ENCODE measurements at regions of chr4 and their contacts with region 1.

Region 1: GRCh38 chr4:122577808-122578781 is 42.8 kb downstream of the IL21 start:
- DNase-seq: peak; percentile 80
- H3K4me3 Mint-ChIP-seq: peak overlapping the region; percentile 62
- H3K27ac Mint-ChIP-seq: peak overlapping the region; percentile 90
- H3K4me1 Mint-ChIP-seq: peaks cover 56% of the 10 kb centered on the region
- H3K27me3 Mint-ChIP-seq: no peaks in the 10 kb centered on the region

Region 2: GRCh38 chr4:121950212-121950679 is 627.8 kb before region 1 on chr4:
- CTCF ChIA-PET with region 1: interaction called, 5 read pairs
- POLR2A ChIA-PET with region 1: no interaction called
- intact Hi-C with region 1: loop called (anchors 1 kb)
- DNase-seq: peak; percentile 91
- H3K4me3 Mint-ChIP-seq: peak overlapping the region; percentile 89
- H3K27ac Mint-ChIP-seq: peak overlapping the region; percentile 19
- H3K4me1 Mint-ChIP-seq: peaks cover 9% of the 10 kb centered on the region
- H3K27me3 Mint-ChIP-seq: peaks cover 15% of the 10 kb centered on the region

Region 3: GRCh38 chr4:122224348-122224747 is 353.7 kb before region 1 on chr4:
- CTCF ChIA-PET with region 1: no interaction called
- POLR2A ChIA-PET with region 1: no interaction called
- intact Hi-C with region 1: loop called (anchors 5 kb)
- DNase-seq: peak; percentile 14
- H3K4me3 Mint-ChIP-seq: no peak overlapping the region
- H3K27ac Mint-ChIP-seq: no peak overlapping the region
- H3K4me1 Mint-ChIP-seq: peaks cover 16% of the 10 kb centered on the region
- H3K27me3 Mint-ChIP-seq: no peaks in the 10 kb centered on the region

Region 4: GRCh38 chr4:122346036-122346435 is 232.1 kb before region 1 on chr4:
- CTCF ChIA-PET with region 1: interaction called, 11 read pairs
- POLR2A ChIA-PET with region 1: no interaction called
- intact Hi-C with region 1: no loop called
- DNase-seq: no peak
- H3K4me3 Mint-ChIP-seq: no peak overlapping the region
- H3K27ac Mint-ChIP-seq: no peak overlapping the region
- H3K4me1 Mint-ChIP-seq: no peaks in the 10 kb centered on the region
- H3K27me3 Mint-ChIP-seq: no peaks in the 10 kb centered on the region

Region 5: GRCh38 chr4:122379239-122379638 is 198.9 kb before region 1 on chr4:
- CTCF ChIA-PET with region 1: no interaction called
- POLR2A ChIA-PET with region 1: no interaction called
- intact Hi-C with region 1: no loop called
- DNase-seq: no peak
- H3K4me3 Mint-ChIP-seq: no peak overlapping the region
- H3K27ac Mint-ChIP-seq: no peak overlapping the region
- H3K4me1 Mint-ChIP-seq: no peaks in the 10 kb centered on the region
- H3K27me3 Mint-ChIP-seq: no peaks in the 10 kb centered on the region

Region 6: DNA sequence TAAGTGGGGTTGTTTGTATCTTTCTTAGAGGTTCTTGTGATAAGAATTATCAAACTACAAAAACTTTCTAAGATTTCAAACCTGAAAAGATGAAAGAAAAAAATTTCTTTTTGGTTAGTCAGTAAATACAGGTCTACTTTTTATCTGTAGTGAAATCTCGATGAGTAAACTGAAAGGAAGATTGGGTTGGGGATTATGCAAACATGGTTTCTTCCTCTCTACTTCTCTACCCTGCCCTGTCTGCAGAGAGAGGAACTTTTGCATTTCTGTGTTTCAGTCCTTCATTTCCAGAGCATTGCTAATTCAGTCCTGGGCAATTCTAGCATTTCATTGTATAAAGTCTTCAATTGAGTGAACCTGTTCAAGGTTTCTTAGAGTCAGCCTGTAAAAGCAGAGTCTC is 70.0 kb before region 1 on chr4:
- CTCF ChIA-PET with region 1: interaction called, 6 read pairs
- POLR2A ChIA-PET with region 1: no interaction called
- intact Hi-C with region 1: loop called (anchors 1 kb)
- DNase-seq: no peak
- H3K4me3 Mint-ChIP-seq: peak overlapping the region; percentile 59
- H3K27ac Mint-ChIP-seq: peak overlapping the region; percentile 87
- H3K4me1 Mint-ChIP-seq: peaks cover 73% of the 10 kb centered on the region
- H3K27me3 Mint-ChIP-seq: no peaks in the 10 kb centered on the region

Region 7: DNA sequence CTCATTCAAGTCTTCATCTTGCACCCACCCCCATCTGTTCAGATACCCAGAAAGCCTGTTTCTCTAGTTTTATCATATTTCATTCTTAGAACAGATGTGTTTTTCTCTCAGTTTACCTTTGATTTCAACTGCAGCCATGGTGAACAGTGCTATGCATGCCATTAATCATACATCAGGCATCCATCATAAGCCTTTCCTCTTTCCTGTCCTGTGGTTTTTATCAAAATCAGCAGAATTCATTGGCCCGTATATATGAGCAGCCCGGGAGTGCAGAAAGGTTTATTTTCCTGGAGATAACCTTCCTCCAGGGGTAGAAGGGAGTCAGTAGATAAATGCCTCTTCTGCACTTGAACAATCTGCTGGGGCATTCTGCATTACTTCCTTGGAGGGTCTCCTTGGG is 22.9 kb before region 1 on chr4:
- CTCF ChIA-PET with region 1: interaction called, 14 read pairs
- POLR2A ChIA-PET with region 1: interaction called, 6 read pairs
- intact Hi-C with region 1: loop called (anchors 1 kb)
- DNase-seq: no peak
- H3K4me3 Mint-ChIP-seq: no peak overlapping the region
- H3K27ac Mint-ChIP-seq: peak overlapping the region; percentile 43
- H3K4me1 Mint-ChIP-seq: peaks cover 67% of the 10 kb centered on the region
- H3K27me3 Mint-ChIP-seq: no peaks in the 10 kb centered on the region